Right lobe of liver (tissue), 6 donors: ENCODE measurements at regions of chr1 and their contacts with region 1.

Region 1: GRCh38 chr1:15272009-15272788 is 25.2 kb downstream of the FHAD1 start:
- DNase-seq: peak in 2 of 3 donors; percentile 51
- ATAC-seq: peak; percentile 87 to 96 (median 90)
- H3K4me3 ChIP-seq: no peak overlapping the region
- H3K27ac ChIP-seq: no peak overlapping the region
- H3K4me1 ChIP-seq: no peaks in the 10 kb centered on the region
- H3K27me3 ChIP-seq: no peaks in the 10 kb centered on the region
- CTCF ChIP-seq: peak; percentile 60 to 77 (median 70)
- POLR2A ChIP-seq: no peak

Region 2: GRCh38 chr1:15128520-15129313 is 143.5 kb before region 1 on chr1:
- intact Hi-C with region 1: loop called in 1 of 2 experiments (anchors 10 kb)
- DNase-seq: peak; percentile 59 to 69 (median 67)
- ATAC-seq: peak; percentile 94 to 99 (median 97)
- H3K4me3 ChIP-seq: no peak overlapping the region
- H3K27ac ChIP-seq: no peak overlapping the region
- H3K4me1 ChIP-seq: no peaks in the 10 kb centered on the region
- H3K27me3 ChIP-seq: no peaks in the 10 kb centered on the region
- CTCF ChIP-seq: peak; percentile 80 to 89 (median 86)
- POLR2A ChIP-seq: no peak

Region 3: DNA sequence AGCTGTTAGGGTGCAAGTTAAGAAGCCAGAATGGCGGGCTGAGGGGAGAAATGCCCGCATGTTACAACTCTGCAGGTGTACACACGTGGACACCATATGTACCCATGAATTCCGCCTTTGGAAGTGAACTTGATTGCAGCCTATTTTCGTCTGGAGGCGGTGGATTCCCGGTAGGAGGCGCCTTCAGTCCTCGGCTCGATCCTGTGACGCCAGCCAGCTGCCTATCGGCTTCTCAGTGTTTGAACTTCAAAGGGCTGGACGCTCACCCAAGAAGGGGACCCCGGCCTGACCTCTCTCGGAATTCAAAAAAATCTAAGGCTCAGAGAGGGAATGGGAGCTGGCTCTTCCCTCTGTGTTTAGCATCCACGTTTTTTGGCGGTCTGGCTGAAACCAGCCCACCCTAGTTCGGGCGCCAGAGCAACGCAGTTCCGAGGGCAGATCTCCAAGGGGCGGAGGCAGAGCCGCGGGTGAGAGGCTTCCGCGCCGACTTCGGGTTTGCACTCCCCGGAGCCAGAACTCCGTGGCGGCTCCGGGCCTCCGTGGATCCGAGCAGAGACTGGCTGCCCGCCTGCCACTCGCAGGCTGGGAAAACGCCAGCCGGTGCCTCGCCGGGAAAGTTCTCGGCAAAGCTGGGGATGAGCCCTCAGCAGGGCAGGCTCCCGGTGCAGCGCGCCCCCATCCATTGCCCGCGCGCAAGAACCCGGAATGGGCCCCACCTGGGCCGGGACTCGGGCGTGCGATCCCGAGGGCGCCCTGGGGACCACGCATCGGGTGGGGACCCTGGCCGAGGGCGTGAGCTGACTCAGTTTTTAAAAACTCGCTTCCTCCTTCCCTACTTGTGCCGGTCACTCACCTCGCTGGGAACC is 119.6 kb before region 1 on chr1:
- intact Hi-C with region 1: loop called in 1 of 2 experiments (anchors 10 kb)
- DNase-seq: peak; percentile 71 to 79 (median 74)
- ATAC-seq: peak; percentile 62 to 75 (median 70)
- H3K4me3 ChIP-seq: peak overlapping the region; percentile 51 to 59 (median 55)
- H3K27ac ChIP-seq: peak overlapping the region; percentile 47 to 88 (median 57)
- H3K4me1 ChIP-seq: peaks cover 0 to 19% (median 3%) of the 10 kb centered on the region in 4 donors
- H3K27me3 ChIP-seq: peaks cover 0 to 26% of the 10 kb centered on the region in 2 donors
- CTCF ChIP-seq: peak; percentile 35 to 56 (median 46)
- POLR2A ChIP-seq: peak; percentile 25